BJ (cell line): ENCODE measurements at regions of chr4 and their contacts with region 1.

Region 1: GRCh38 chr4:38179690-38180377 is 219.6 kb downstream of the PTTG2 start:
- DNase-seq: no peak
- H3K4me3 ChIP-seq: no peak overlapping the region
- H3K27me3 ChIP-seq: no peaks in the 10 kb centered on the region
- CTCF ChIP-seq: peak; percentile 88

Region 2: GRCh38 chr4:38062088-38062893 is 117.5 kb before region 1 on chr4:
- CTCF ChIA-PET with region 1: interaction called, 11 read pairs
- POLR2A ChIA-PET with region 1: no interaction called
- DNase-seq: no peak
- H3K4me3 ChIP-seq: 0 out of 2 replicates have a peak overlapping the region, but pooled peaks have one; percentile 4
- H3K27me3 ChIP-seq: no peaks in the 10 kb centered on the region
- CTCF ChIP-seq: peak; percentile 73

Region 3: GRCh38 chr4:38319456-38320342 is 139.9 kb after region 1 on chr4:
- CTCF ChIA-PET with region 1: interaction called, 11 read pairs
- POLR2A ChIA-PET with region 1: no interaction called
- DNase-seq: peak; percentile 42
- H3K4me3 ChIP-seq: no peak overlapping the region
- H3K27me3 ChIP-seq: no peaks in the 10 kb centered on the region
- CTCF ChIP-seq: peak; percentile 100

Region 4: DNA sequence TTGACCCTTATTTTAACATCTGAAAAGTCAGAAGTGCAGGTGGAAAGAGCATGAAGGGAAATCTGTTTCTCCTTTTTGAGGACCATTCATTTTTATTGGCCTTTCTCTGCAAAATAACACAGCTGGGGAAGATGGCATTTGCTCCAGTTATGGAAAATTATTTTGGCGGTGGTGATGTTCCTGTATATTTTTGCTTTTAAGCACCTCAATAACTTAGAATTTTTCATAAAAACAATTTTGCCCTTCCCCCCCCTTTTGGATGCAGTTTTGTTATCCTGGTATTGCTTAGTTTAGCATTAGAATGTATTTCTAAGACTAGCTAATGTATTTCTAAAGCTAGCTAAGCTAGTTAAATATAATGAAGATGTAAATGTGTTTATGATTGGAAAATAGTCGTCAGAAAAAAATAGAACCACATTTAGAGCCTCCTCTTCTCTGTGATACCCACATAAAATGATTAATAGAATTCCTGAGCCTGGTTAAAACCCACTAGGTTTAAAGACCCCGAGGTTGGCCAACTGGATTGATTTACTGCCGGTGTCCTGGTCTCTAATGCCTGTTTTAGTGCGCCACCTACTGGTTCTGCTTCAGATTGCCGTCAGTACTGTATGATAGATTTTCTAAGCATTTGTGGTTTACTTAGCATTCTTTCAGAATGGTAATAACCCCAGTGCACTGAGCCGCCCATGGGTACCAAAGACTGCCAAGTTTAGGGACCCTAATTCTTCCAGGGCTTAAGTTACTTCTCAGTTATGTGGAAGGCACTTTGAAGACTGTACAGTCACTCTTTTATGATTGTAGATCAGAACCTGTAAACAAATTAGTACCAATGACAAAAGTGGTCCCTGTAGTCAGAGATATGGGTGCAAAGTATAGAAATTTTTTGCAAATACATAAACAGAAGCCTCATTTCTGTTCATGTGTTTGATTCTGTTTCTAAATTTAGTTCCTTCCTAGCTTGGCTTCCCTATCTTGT is 495.6 kb after region 1 on chr4:
- CTCF ChIA-PET with region 1: interaction called, 51 read pairs
- POLR2A ChIA-PET with region 1: no interaction called
- DNase-seq: peak; percentile 22
- H3K4me3 ChIP-seq: no peak overlapping the region
- H3K27me3 ChIP-seq: no peaks in the 10 kb centered on the region
- CTCF ChIP-seq: peak; percentile 88

Region 5: DNA sequence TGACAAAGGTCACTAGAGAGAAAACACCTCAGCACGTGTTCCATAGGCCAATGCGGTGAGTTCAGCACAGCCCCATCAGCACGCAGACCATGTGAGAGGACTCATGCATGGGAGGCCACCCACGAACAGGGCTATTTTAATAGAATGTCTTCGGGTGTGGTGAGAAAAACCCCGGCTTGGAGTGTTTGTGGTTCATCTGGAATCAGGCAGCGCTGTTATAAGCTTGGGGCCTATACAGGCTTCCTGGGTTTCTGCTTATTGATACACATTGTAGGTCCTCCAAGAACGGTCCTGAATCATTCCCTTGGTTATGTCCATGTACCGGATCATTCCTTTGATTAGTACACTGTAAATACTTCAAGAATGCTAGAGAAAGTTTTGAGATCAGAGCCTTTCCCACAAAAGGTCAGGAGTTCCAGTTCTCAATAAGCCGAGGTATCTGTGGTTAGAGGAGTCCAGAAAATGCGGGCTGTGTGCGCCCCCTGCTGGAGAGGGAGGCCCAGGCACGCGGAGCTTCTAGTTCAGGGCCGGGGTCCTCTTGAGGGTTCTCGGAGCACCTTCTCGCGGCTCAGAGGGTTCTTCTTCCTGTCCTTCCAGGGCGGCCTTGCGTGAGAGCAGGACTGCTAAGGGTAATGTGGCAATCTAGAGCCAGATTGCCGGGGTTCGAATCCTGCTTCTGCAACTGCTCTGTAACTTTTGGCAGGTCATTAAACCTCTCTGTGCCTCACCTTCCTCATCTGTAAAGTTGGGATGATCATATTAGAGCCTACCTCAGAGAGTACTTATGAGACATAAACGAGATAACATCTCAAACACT is 551.2 kb after region 1 on chr4:
- CTCF ChIA-PET with region 1: interaction called, 60 read pairs
- POLR2A ChIA-PET with region 1: no interaction called
- DNase-seq: peak; percentile 38
- H3K4me3 ChIP-seq: no peak overlapping the region
- H3K27me3 ChIP-seq: peaks cover 3% of the 10 kb centered on the region; the same call in 1 of the 2 replicates
- CTCF ChIP-seq: peak; percentile 95

Region 6: GRCh38 chr4:38743866-38744265 is 564.0 kb after region 1 on chr4:
- CTCF ChIA-PET with region 1: interaction called, 16 read pairs
- POLR2A ChIA-PET with region 1: no interaction called
- DNase-seq: no peak
- H3K4me3 ChIP-seq: no peak overlapping the region
- H3K27me3 ChIP-seq: no peaks in the 10 kb centered on the region; the same call in 1 of the 2 replicates
- CTCF ChIP-seq: no peak

Region 7: DNA sequence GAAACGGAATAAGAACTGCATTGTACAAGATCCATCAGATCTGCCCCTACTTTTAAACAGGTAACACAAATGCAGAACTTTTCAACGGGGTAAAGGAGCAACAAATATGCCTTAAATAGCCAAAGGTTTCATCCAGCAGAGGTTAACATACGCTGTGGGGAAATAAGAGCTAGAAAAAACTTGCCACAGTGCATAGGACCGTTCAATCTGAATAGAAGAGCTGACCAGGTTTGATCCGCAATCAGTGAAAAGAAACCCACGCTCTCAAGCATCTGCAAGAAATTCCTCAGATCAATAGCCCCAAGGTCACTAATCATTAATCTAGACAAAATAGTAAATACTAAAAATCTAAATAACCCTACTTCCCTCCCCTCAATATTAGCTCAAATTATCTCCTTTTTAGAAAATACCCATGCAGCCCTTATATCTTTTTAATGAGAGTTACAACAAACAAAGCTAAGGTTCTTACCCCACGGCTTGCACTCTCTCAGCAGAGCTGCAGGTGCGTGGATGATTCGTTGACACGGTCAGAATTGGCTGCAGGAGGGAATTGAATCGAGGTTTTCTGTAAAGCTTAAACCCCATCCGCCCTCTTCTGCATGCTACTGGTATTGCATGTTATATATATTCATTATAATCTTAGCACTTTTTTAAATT is 602.7 kb after region 1 on chr4 and contains the start of gene TLR10:
- CTCF ChIA-PET with region 1: interaction called, 17 read pairs
- POLR2A ChIA-PET with region 1: no interaction called
- DNase-seq: no peak
- H3K4me3 ChIP-seq: no peak within 1 kb of the TSS
- H3K27me3 ChIP-seq: no peaks in the 10 kb centered on the region
- CTCF ChIP-seq: peak; percentile 68
- polyA plus RNA-seq, gene TLR10: not detected in 2 replicates